ENCODE measurements at regions of chr7 and their contacts with region 1.

Region 1: GRCh38 chr7:120950539-120951308 is at the start of gene ING3:
- H3K4me3 ChIP-seq: peak within 1 kb of the TSS; percentile 95
- H3K27ac ChIP-seq: peak within 1 kb of the TSS; percentile 98
- H3K4me1 ChIP-seq: peaks cover 8% of the 10 kb centered on the region; the same call in 1 of the 2 replicates
- CTCF ChIP-seq: no peak

Region 2: GRCh38 chr7:120829487-120829886 is 121.2 kb before region 1 on chr7:
- CTCF ChIA-PET with region 1: no interaction called
- POLR2A ChIA-PET with region 1: no interaction called
- H3K4me3 ChIP-seq: no peak overlapping the region
- H3K27ac ChIP-seq: no peak overlapping the region
- H3K4me1 ChIP-seq: peaks cover 23% of the 10 kb centered on the region
- CTCF ChIP-seq: no peak

Region 3: DNA sequence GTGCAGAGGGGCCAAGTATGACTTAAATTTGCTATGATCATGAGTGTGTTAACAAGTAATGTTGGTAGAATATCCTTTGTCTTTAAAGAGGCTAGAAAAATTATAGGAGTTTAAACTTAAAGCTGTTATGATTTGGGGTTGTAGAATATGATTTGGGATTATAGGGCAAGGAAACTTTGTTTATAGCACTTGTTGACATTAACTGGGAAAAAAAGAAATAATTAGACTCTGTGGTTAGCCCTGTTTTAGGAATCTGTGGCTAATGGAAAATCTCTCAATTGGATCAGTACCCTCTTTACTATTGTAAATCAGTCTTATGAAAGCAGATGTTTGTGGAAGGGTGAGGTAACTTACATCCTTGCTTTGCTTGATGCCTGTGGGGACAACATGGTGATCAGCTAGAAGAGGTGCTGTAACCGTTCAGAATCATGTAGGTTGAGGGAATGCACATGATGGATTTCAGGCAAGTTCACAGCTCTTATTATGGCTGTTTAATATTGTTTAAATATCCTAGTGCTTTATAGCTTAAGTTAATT is 11.0 kb after region 1 on chr7:
- CTCF ChIA-PET with region 1: no interaction called
- POLR2A ChIA-PET with region 1: interaction called, 11 read pairs
- H3K4me3 ChIP-seq: no peak overlapping the region
- H3K27ac ChIP-seq: no peak overlapping the region
- H3K4me1 ChIP-seq: peaks cover 5% of the 10 kb centered on the region
- CTCF ChIP-seq: no peak

Measured in HEK293 (cell line).